Prostate gland (tissue), 2 donors: ENCODE measurements at regions of chr13 and their contacts with region 1.

Region 1: GRCh38 chr13:76991796-76992547 is at the start of gene CLN5:
- DNase-seq: peak; percentile 91
- H3K4me3 ChIP-seq: peak within 1 kb of the TSS; percentile 63 to 92
- H3K27ac ChIP-seq: peak within 1 kb of the TSS; percentile 85 to 91
- H3K4me1 ChIP-seq: no peaks in the 10 kb centered on the region
- H3K27me3 ChIP-seq: peaks cover 1% of the 10 kb centered on the region
- CTCF ChIP-seq: peak in 3 of 4 experiments; percentile 14 to 42 (median 41)
- POLR2A ChIP-seq: peak; percentile 97
- total RNA-seq, gene CLN5: 27.1 to 34.3 TPM

Region 2: GRCh38 chr13:77026818-77027585 is 35.0 kb after region 1 on chr13 and contains the start of gene FBXL3:
- intact Hi-C with region 1: loop called (anchors 2 kb)
- DNase-seq: peak; percentile 85
- H3K4me3 ChIP-seq: peak within 1 kb of the TSS; percentile 96 to 97
- H3K27ac ChIP-seq: peak within 1 kb of the TSS; percentile 98 to 99
- H3K4me1 ChIP-seq: no peaks in the 10 kb centered on the region
- H3K27me3 ChIP-seq: no peaks in the 10 kb centered on the region
- CTCF ChIP-seq: no peak
- POLR2A ChIP-seq: peak; percentile 67
- total RNA-seq, gene FBXL3: 85.6 to 113 TPM

Region 3: DNA sequence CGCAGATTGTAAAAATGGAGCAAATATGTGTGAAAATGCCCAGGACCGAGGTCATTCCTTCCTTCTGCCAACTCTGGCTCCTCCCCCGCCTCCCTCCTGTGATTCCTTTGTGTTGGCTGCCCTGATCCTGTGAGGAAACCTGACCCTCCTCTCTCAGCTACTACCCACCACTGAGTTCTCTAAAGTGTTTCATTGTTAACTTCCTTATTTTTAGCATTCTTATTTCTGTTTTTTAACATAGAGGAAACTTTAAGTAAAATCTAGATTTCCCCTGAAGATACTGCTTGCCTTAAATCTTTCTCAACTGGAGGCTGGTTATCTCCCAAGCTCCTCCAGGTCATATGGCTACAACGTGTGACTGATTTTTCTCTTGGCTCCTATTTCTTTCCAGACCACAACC is 56.7 kb after region 1 on chr13:
- intact Hi-C with region 1: no loop called
- DNase-seq: no peak
- H3K4me3 ChIP-seq: no peak overlapping the region
- H3K27ac ChIP-seq: no peak overlapping the region
- H3K4me1 ChIP-seq: no peaks in the 10 kb centered on the region
- H3K27me3 ChIP-seq: no peaks in the 10 kb centered on the region
- CTCF ChIP-seq: no peak
- POLR2A ChIP-seq: no peak